Breast epithelium (tissue), 4 donors: ENCODE measurements at regions of chr2 and their contacts with region 1.

Region 1: DNA sequence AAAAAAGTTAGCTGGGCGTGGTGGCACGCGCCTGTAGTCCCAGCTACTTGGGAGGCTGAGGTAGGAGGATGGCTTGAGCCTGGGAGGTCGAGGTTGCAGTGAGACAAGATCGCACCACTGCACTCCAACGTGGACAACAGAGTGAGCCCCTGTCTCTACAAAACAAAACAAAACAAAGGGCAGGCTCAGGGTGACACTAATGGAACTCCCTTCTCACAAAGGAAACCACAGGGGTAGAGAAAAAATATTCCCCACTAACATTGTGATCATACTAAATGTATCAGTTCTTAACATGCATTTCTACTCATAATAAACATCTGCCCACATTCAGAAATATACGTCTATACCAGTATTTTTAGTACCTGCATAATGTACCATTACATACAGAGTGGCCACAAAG is 21.1 kb downstream of the STAM2 start:
- DNase-seq: no peak
- H3K4me3 ChIP-seq: no peak overlapping the region
- H3K27ac ChIP-seq: no peak overlapping the region
- H3K4me1 ChIP-seq: no peaks in the 10 kb centered on the region
- H3K27me3 ChIP-seq: no peaks in the 10 kb centered on the region
- CTCF ChIP-seq: no peak
- POLR2A ChIP-seq: no peak

Region 2: GRCh38 chr2:151459358-151459757 is 695.1 kb before region 1 on chr2:
- intact Hi-C with region 1: loop called (anchors 5 kb)
- DNase-seq: no peak
- H3K4me3 ChIP-seq: no peak overlapping the region
- H3K27ac ChIP-seq: no peak overlapping the region
- H3K4me1 ChIP-seq: no peaks in the 10 kb centered on the region
- H3K27me3 ChIP-seq: no peaks in the 10 kb centered on the region
- CTCF ChIP-seq: no peak
- POLR2A ChIP-seq: no peak